ENCODE measurements at regions of chr2 and their contacts with region 1.

Region 1: DNA sequence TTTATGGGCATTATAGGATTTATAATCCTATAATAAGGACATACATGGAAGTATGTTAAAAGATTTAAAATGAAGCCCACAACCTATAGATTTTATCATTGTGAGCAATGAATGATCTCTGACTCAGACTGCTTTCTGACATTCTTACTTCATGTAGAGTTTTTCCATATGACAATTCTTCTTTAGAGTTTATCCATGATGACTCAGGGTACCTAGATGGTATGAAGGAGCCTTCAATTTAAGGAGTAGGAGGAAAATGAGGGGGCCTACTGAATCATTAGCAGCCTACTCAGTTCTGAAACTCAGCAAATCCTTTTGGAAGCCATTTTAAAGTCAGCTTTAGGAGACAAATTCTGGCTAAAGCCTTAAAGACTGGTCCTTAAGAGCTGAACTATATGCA is 10.4 kb downstream of the PELI1 start:
- DNase-seq: no peak
- H3K4me3 Mint-ChIP-seq: no peak overlapping the region
- H3K27ac Mint-ChIP-seq: peak overlapping the region; percentile 72
- H3K4me1 Mint-ChIP-seq: peaks cover 88% of the 10 kb centered on the region
- H3K27me3 Mint-ChIP-seq: no peaks in the 10 kb centered on the region

Region 2: GRCh38 chr2:64080179-64080578 is 53.6 kb before region 1 on chr2:
- CTCF ChIA-PET with region 1: no interaction called
- intact Hi-C with region 1: no loop called
- DNase-seq: no peak
- H3K4me3 Mint-ChIP-seq: no peak overlapping the region
- H3K27ac Mint-ChIP-seq: no peak overlapping the region
- H3K4me1 Mint-ChIP-seq: no peaks in the 10 kb centered on the region
- H3K27me3 Mint-ChIP-seq: no peaks in the 10 kb centered on the region

Region 3: GRCh38 chr2:64101141-64101591 is 32.7 kb before region 1 on chr2:
- CTCF ChIA-PET with region 1: interaction called, 5 read pairs
- intact Hi-C with region 1: loop called (anchors 1 kb)
- DNase-seq: no peak
- H3K4me3 Mint-ChIP-seq: no peak overlapping the region
- H3K27ac Mint-ChIP-seq: peak overlapping the region; percentile 76
- H3K4me1 Mint-ChIP-seq: peaks cover 51% of the 10 kb centered on the region
- H3K27me3 Mint-ChIP-seq: no peaks in the 10 kb centered on the region

Region 4: GRCh38 chr2:64114063-64114911 is 19.5 kb before region 1 on chr2:
- CTCF ChIA-PET with region 1: interaction called, 7 read pairs
- intact Hi-C with region 1: loop called (anchors 1 kb)
- DNase-seq: no peak
- H3K4me3 Mint-ChIP-seq: no peak overlapping the region
- H3K27ac Mint-ChIP-seq: peak overlapping the region; percentile 1
- H3K4me1 Mint-ChIP-seq: peaks cover 80% of the 10 kb centered on the region
- H3K27me3 Mint-ChIP-seq: no peaks in the 10 kb centered on the region

Region 5: GRCh38 chr2:64120928-64121327 is 12.9 kb before region 1 on chr2:
- CTCF ChIA-PET with region 1: no interaction called
- intact Hi-C with region 1: loop called (anchors 1 kb)
- DNase-seq: no peak
- H3K4me3 Mint-ChIP-seq: no peak overlapping the region
- H3K27ac Mint-ChIP-seq: no peak overlapping the region
- H3K4me1 Mint-ChIP-seq: peaks cover 66% of the 10 kb centered on the region
- H3K27me3 Mint-ChIP-seq: no peaks in the 10 kb centered on the region

Region 6: DNA sequence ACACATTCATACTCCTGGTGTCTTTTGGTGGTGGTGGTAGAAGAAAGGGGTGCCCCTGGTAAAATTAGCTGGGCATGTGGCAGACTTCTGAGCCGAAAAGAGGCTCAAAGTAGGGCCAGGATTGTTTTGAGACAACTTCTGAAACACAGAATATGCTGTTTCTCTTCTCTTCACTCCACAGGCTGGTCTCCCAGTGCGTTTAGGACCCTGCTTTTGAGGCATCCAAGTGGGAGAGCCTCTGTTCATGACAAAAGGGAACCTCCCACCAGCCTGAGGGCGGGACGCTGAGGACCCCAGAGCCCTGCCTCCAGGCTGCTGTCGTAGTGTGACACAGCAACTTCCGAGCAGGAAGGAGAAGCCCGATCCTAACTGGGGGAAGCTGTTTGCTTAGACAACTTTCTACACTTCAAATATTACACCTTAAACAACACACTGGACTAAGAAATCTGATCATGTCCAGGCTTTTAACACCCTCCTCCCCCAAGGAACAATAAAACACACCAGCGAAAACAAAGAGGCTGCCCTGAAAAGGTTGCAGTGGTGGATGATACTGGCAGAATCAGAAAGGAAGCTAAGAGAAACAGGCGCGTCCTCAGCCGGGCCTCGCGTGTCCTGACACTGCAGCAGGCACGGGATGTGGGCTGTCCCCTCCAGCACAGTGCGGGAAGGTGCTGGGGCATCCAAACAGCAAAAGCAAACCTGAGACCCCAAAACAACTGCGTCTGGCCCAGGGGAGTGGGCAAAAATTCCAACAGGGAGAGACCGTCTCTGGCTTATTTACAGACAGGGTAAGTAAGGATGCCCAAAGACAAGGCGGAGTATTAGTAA is 510.6 kb after region 1 on chr2:
- CTCF ChIA-PET with region 1: no interaction called
- intact Hi-C with region 1: no loop called
- DNase-seq: peak; percentile 78
- H3K4me3 Mint-ChIP-seq: peak overlapping the region; percentile 87
- H3K27ac Mint-ChIP-seq: peak overlapping the region; percentile 87
- H3K4me1 Mint-ChIP-seq: peaks cover 80% of the 10 kb centered on the region
- H3K27me3 Mint-ChIP-seq: no peaks in the 10 kb centered on the region

Region 7: DNA sequence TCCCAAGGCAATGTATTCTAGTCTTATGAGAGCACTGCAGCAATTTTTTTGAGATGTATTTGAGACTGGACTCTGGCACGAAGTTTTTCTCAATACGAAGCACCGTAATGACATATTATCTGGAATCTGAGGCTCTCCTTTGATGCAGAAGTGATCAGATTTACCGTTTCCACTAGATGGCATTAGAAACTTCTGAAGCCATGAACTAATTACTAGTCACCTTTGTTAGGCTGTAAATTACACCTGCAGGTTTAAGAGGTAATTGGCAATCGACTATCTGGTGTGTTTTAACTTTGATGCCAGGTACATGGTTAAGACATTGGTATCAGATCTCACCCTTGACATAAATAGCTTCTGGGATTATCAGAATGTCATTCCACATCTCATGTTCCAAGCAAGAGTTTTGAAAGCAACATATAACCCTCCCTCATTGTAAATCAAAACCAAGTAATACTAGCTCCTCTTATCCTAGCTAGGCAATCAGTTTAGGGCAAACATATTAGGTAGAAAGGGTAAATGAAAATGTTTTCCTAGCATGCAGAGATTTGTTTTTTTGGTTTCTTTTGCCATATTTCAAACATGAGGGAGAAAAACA is 1553.2 kb after region 1 on chr2:
- CTCF ChIA-PET with region 1: no interaction called
- intact Hi-C with region 1: no loop called
- DNase-seq: no peak
- H3K4me3 Mint-ChIP-seq: no peak overlapping the region
- H3K27ac Mint-ChIP-seq: no peak overlapping the region
- H3K4me1 Mint-ChIP-seq: no peaks in the 10 kb centered on the region
- H3K27me3 Mint-ChIP-seq: peaks cover 11% of the 10 kb centered on the region

Measured in activated naive CD4-positive, alpha-beta T cell treated with anti-CD3 and anti-CD28 coated beads for 36 hours (primary cell).